Esophagus squamous epithelium (tissue), 5 donors: ENCODE measurements at regions of chr11 and their contacts with region 1.

Region 1: DNA sequence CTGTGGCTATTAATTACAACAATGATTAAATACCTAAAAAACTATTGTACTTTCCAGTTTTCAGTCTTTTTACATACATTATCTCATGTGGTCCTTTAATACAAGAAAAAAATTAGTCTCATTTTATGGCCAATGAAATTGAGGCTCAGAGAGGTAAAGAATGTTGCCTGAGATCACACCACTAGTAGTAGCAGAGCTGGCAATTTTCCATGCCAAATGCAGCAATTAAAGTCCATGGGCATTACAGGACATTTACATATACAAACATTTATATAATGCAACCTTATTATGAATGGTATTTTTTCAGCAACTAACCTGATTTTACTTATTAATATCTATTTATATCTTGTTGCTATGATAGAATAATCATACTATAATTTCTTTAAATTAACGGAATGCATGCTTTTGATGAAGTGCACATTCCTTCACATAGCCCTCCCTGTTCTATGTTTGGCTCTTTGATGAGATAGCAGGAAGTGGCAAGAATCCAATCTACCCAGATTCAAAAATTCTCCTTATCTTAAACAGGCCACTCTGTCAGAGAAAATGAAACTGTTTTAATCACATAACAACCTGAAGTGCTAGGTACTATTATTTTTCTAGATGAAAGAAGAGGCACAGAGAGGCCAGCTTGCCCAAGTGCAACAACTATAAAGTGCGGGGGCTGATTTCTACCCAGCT is 120.9 kb upstream of the LDLRAD3 start:
- DNase-seq: no peak
- H3K4me3 ChIP-seq: no peak overlapping the region
- H3K27ac ChIP-seq: no peak overlapping the region
- H3K4me1 ChIP-seq: peaks cover 0 to 20% (median 0%) of the 10 kb centered on the region in 3 donors
- H3K27me3 ChIP-seq: no peaks in the 10 kb centered on the region
- CTCF ChIP-seq: no peak
- POLR2A ChIP-seq: no peak

Region 2: GRCh38 chr11:35714882-35715627 is 107.9 kb before region 1 on chr11:
- intact Hi-C with region 1: no loop called
- DNase-seq: no peak
- H3K4me3 ChIP-seq: no peak overlapping the region
- H3K27ac ChIP-seq: no peak overlapping the region
- H3K4me1 ChIP-seq: no peaks in the 10 kb centered on the region
- H3K27me3 ChIP-seq: no peaks in the 10 kb centered on the region
- CTCF ChIP-seq: no peak
- POLR2A ChIP-seq: no peak

Region 3: DNA sequence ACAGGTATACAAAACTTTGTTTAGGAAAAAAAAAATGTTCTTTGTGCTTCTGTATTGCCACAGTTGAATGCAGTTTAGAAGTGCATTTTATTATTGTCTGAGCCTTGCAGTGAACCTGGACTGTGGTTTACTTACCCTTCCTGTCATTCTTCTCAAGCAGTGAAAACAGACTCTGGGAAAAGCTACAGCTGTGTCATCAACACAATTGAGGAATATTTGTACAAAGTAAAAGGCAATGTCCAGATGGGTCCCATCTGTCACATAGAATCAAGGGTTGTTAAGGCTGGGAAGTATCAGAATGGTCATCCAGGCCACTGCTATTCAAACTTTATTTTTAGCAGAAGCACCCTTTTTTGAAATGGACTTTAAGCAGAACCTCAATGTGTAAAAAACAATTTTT is 87.1 kb before region 1 on chr11:
- intact Hi-C with region 1: no loop called
- DNase-seq: no peak
- H3K4me3 ChIP-seq: no peak overlapping the region
- H3K27ac ChIP-seq: no peak overlapping the region
- H3K4me1 ChIP-seq: no peaks in the 10 kb centered on the region
- H3K27me3 ChIP-seq: no peaks in the 10 kb centered on the region
- CTCF ChIP-seq: no peak
- POLR2A ChIP-seq: no peak

Region 4: GRCh38 chr11:35943713-35944655 is 121.0 kb after region 1 on chr11 and contains the start of gene LDLRAD3:
- intact Hi-C with region 1: loop called (anchors 10 kb)
- DNase-seq: no peak
- H3K4me3 ChIP-seq: peak within 1 kb of the TSS; percentile 41 to 83 (median 62)
- H3K27ac ChIP-seq: peak within 1 kb of the TSS; percentile 75 to 91 (median 84)
- H3K4me1 ChIP-seq: peaks cover 9 to 34% (median 12%) of the 10 kb centered on the region in 3 donors
- H3K27me3 ChIP-seq: no peaks in the 10 kb centered on the region
- CTCF ChIP-seq: no peak
- POLR2A ChIP-seq: peak in 1 of 4 donors; percentile 17
- total RNA-seq, gene LDLRAD3: 5.0 to 16.8 (median 8.2) TPM

Region 5: GRCh38 chr11:36069576-36070212 is 246.7 kb after region 1 on chr11:
- intact Hi-C with region 1: loop called (anchors 10 kb)
- DNase-seq: no peak
- H3K4me3 ChIP-seq: no peak overlapping the region
- H3K27ac ChIP-seq: no peak overlapping the region
- H3K4me1 ChIP-seq: peaks cover 6 to 39% (median 6%) of the 10 kb centered on the region in 3 donors
- H3K27me3 ChIP-seq: no peaks in the 10 kb centered on the region
- CTCF ChIP-seq: peak in 5 of 6 experiments; percentile 13 to 68 (median 38)
- POLR2A ChIP-seq: no peak

Region 6: GRCh38 chr11:36131721-36132397 is 308.9 kb after region 1 on chr11:
- intact Hi-C with region 1: loop called (anchors 10 kb)
- DNase-seq: no peak
- H3K4me3 ChIP-seq: no peak overlapping the region
- H3K27ac ChIP-seq: peak overlapping the region in 1 of 4 donors; percentile 21
- H3K4me1 ChIP-seq: peaks cover 0 to 4% (median 0%) of the 10 kb centered on the region in 3 donors
- H3K27me3 ChIP-seq: no peaks in the 10 kb centered on the region
- CTCF ChIP-seq: peak in 4 of 6 experiments; percentile 42 to 59 (median 48)
- POLR2A ChIP-seq: no peak

Region 7: DNA sequence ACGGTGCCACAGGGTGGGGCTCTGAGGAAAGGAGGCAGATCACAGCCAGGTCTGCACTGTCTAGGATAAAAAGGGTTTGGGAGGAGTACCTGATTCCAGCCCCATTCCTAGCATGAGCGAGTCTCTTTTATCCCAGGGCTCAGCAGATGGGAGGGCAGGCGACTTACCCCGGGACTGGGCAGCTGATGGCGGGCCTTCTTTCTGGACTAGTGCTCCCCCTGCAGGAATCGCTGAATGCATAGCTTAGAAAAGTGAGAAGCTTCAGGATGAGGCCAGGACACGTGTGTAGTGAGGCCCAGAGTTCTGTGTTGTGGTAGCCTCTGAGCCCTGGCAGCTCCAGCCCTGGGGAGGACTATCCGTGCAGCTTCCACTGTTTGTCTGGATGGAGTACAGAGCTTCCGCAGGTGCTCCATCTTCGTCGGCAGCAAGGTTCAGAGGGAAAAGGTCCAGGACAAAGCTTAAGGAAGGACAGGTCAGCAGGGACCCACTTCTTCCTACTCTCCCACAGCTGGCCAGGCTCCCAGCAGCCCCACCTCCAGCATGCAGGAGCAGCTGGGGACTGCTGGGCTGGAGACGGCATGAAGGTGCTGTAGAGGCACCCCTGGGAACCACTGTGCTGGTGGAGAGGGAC is 435.9 kb after region 1 on chr11:
- intact Hi-C with region 1: loop called (anchors 10 kb)
- DNase-seq: no peak
- H3K4me3 ChIP-seq: no peak overlapping the region
- H3K27ac ChIP-seq: no peak overlapping the region
- H3K4me1 ChIP-seq: no peaks in the 10 kb centered on the region
- H3K27me3 ChIP-seq: peaks cover 0 to 4% (median 0%) of the 10 kb centered on the region in 4 donors
- CTCF ChIP-seq: peak in 5 of 6 experiments; percentile 39 to 77 (median 53)
- POLR2A ChIP-seq: no peak